Calu3 (cell line): ENCODE measurements at regions of chr15 and their contacts with region 1.

Region 1: DNA sequence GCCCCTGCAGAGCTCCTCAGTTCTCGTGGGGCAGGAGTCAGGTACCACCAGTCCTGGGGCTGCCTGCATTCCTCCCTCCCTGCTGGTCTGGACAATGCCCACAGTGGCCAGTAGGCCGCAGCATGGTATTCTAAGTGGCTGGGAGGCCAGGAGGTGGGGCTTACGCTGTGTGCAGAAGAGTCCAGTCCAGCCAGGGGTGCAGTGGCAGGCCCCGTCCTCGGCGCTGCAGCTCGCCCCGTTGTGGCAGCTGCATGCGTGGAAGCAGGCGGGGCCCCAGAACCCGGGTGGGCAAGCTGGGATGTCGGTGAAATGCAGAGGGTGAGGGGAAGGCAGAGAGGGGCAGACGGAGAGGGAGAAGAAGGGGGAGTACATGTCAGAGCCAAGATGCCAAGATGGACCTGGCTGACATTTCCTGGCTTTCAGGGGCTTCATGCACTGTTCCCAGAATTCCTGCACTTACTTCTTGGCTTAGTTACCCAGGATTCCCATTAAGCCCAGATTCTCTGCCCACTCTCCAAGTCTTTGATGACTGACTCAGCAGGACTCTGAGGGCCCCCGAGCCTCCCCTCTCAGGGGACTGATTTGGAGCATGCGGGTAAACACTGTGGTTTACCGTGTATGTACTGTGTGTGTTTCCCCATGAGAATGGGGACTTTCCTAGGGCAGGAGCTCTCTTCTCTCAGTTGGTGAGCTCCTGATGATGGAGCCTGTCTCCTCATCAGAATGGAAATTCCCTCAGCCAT is 47.5 kb downstream of the RAB11A start:
- DNase-seq: peak; percentile 85
- H3K4me3 Mint-ChIP-seq: no peak overlapping the region
- H3K27ac Mint-ChIP-seq: no peak overlapping the region
- H3K4me1 Mint-ChIP-seq: peaks cover 8% of the 10 kb centered on the region
- H3K27me3 Mint-ChIP-seq: no peaks in the 10 kb centered on the region
- CTCF ChIP-seq: peak; percentile 81

Region 2: DNA sequence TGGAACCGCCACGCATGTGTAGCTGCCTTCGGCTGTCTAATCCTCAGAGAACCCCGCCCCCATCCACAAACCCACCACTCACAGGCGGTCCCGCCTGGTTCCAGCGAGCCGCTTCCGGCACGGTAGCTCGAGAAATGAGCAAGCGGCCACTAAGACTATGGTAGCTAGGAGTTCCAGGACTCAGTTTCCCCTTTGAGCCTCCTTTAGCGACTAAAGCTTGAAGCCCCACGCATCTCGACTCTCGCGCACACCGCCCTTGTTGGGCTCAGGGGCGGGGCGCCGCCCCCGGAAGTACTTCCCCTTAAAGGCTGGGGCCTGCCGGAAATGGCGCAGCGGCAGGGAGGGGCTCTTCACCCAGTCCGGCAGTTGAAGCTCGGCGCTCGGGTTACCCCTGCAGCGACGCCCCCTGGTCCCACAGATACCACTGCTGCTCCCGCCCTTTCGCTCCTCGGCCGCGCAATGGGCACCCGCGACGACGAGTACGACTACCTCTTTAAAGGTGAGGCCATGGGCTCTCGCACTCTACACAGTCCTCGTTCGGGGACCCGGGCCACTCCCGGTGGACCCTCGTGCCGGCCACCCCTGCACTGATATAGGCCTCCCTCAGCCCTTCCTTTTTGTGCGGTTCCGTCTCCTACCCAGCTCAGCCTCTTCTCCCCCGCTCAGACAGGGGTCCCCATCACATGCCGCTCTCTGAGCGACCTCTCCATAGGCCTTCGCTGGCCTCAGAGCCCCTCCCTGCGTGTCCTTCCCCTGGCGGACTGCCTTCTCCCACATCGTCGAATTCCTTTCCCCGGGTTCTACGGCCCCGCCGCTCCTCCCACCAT is 47.5 kb before region 1 on chr15 and contains the start of gene RAB11A:
- CTCF ChIA-PET with region 1: no interaction called
- intact Hi-C with region 1: no loop called
- DNase-seq: peak; percentile 97
- H3K4me3 Mint-ChIP-seq: peak within 1 kb of the TSS; percentile 96
- H3K27ac Mint-ChIP-seq: peak within 1 kb of the TSS; percentile 92
- H3K4me1 Mint-ChIP-seq: peaks cover 8% of the 10 kb centered on the region
- H3K27me3 Mint-ChIP-seq: no peaks in the 10 kb centered on the region
- CTCF ChIP-seq: peak; percentile 19
- total RNA-seq, gene RAB11A: 404 and 407 TPM in 2 replicates

Region 3: DNA sequence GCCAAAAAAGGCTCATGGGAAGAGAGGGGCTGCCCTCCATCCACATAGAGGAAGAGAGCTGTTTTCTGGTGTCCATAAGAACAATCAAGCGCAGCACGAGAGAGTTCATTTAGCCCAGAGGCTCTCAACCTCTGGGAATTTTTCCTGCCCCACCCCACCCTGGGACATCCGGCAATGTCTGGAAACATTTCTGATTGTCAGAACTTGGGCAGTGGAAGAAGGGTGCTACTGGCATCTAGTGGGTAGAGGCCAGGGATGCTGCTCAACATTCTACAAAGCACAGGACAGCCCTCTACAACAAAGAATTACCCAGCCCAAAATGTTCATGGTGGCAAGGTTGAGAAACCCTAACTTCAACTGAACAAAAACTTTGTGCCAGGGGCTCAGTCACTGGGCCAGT is 45.4 kb after region 1 on chr15:
- CTCF ChIA-PET with region 1: no interaction called
- intact Hi-C with region 1: loop called (anchors 2 kb)
- DNase-seq: peak; percentile 58
- H3K4me3 Mint-ChIP-seq: no peak overlapping the region
- H3K27ac Mint-ChIP-seq: no peak overlapping the region
- H3K4me1 Mint-ChIP-seq: peaks cover 8% of the 10 kb centered on the region
- H3K27me3 Mint-ChIP-seq: peaks cover 5% of the 10 kb centered on the region
- CTCF ChIP-seq: no peak

Region 4: GRCh38 chr15:66014635-66015182 is 97.9 kb after region 1 on chr15:
- CTCF ChIA-PET with region 1: no interaction called
- intact Hi-C with region 1: no loop called
- DNase-seq: no peak
- H3K4me3 Mint-ChIP-seq: no peak overlapping the region
- H3K27ac Mint-ChIP-seq: no peak overlapping the region
- H3K4me1 Mint-ChIP-seq: no peaks in the 10 kb centered on the region
- H3K27me3 Mint-ChIP-seq: peaks cover 45% of the 10 kb centered on the region
- CTCF ChIP-seq: no peak

Region 5: DNA sequence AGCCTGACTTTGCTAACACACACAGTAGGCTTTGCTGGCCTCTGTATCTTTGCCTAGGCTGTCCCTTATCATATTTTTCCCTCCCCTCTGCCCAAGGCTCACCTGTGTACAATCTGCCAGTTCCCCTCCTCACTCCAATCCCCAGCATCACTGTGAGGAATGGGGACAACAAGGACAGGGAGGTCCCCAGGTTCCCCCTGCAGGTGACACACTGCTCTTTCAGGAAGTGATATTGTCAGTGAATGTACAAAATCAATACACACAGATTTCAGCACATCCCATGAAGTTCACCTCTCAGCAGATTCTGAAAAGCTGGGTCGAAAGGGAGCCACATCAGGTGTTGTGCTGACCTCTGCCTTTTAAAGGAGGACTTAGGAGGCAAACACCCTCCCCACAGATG is 129.9 kb after region 1 on chr15:
- CTCF ChIA-PET with region 1: interaction called, 3 read pairs
- intact Hi-C with region 1: loop called (anchors 5 kb)
- DNase-seq: peak; percentile 52
- H3K4me3 Mint-ChIP-seq: no peak overlapping the region
- H3K27ac Mint-ChIP-seq: no peak overlapping the region
- H3K4me1 Mint-ChIP-seq: no peaks in the 10 kb centered on the region
- H3K27me3 Mint-ChIP-seq: peaks cover 14% of the 10 kb centered on the region
- CTCF ChIP-seq: peak; percentile 71

Region 6: DNA sequence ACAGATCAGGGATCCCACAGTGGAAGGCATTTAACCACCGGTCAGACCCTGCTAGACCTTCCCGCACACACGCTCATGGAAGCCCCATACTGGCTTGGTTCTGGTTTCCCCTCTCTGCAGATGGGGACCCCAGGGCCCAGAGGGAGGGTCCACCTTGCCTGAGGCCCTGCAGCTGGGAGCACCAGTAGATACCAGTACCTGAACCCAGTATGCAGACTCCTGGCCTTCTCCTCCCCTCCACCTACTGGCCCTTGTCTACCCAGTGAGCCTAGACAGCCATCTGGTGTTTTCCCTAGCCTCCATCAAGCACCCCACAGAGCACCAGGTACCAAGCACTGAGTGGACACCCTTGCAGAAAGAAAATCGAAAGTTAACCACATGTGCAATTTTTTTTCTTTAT is 271.6 kb after region 1 on chr15:
- CTCF ChIA-PET with region 1: no interaction called
- intact Hi-C with region 1: loop called (anchors 5 kb)
- DNase-seq: no peak
- H3K4me3 Mint-ChIP-seq: no peak overlapping the region
- H3K27ac Mint-ChIP-seq: no peak overlapping the region
- H3K4me1 Mint-ChIP-seq: no peaks in the 10 kb centered on the region
- H3K27me3 Mint-ChIP-seq: peaks cover 63% of the 10 kb centered on the region
- CTCF ChIP-seq: no peak